ENCODE measurements at regions of chr3 and their contacts with region 1.

Region 1: GRCh38 chr3:173681188-173681678 is 283.7 kb downstream of the NLGN1 start:
- DNase-seq: no peak
- H3K4me3 ChIP-seq: no peak overlapping the region
- H3K27ac ChIP-seq: no peak overlapping the region
- H3K4me1 ChIP-seq: no peaks in the 10 kb centered on the region
- H3K27me3 ChIP-seq: no peaks in the 10 kb centered on the region
- CTCF ChIP-seq: no peak
- POLR2A ChIP-seq: no peak

Region 2: DNA sequence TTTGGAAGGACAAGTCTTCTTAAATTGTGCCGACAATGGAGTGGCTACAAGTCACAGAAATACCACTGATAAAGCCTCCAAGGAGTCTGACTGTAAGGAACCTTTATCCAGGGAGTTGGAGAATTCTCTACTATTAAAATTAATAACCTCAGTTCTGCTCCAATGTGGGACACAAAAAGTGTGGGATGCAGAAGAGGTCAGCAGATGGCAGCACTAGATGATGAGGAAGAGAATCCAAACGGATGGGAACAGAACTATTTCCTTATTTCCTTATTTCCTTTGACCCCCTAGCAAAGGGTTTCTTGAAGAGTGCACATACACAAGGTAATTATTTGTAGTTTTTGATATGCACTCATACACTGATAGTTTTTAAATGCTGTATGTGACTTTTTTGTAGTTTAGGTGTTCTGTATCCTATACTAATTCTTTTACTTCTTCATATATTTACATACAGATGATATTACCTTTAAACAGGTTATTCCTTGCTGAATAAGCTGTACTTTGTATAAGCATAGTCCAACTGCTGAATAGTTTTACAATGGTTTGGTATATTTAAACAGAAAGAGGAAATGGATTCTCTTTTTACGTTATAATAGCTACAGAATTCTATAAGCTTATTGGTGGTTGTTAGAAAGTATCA is 309.3 kb before region 1 on chr3:
- intact Hi-C with region 1: loop called (anchors 5 kb)
- DNase-seq: no peak
- H3K4me3 ChIP-seq: no peak overlapping the region
- H3K27ac ChIP-seq: no peak overlapping the region
- H3K4me1 ChIP-seq: no peaks in the 10 kb centered on the region
- H3K27me3 ChIP-seq: no peaks in the 10 kb centered on the region
- CTCF ChIP-seq: peak; percentile 29 to 58 (median 48)
- POLR2A ChIP-seq: no peak

Region 3: GRCh38 chr3:173911446-173911845 is 230.2 kb after region 1 on chr3:
- intact Hi-C with region 1: no loop called
- DNase-seq: no peak
- H3K4me3 ChIP-seq: no peak overlapping the region
- H3K27ac ChIP-seq: no peak overlapping the region
- H3K4me1 ChIP-seq: no peaks in the 10 kb centered on the region
- H3K27me3 ChIP-seq: no peaks in the 10 kb centered on the region
- CTCF ChIP-seq: no peak
- POLR2A ChIP-seq: no peak

Region 4: DNA sequence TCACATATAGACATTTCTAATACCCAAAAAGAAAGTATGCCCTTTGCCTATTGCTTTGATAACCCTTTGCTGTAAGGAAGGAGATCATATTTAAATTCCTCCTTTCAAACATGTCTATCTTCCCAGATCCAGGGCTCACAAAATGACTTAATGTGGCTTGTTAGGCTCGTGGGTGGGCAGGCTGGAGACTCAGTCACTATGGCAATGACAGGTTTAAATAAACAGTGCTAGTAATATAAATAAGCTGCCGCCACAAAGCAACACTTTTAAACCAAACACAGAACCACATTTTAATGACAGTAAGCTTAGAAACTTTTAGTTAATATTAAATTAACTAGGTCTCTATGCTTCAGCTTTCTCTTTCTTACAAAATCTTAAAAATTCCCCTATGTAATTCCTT is 561.9 kb after region 1 on chr3:
- intact Hi-C with region 1: no loop called
- DNase-seq: no peak
- H3K4me3 ChIP-seq: no peak overlapping the region
- H3K27ac ChIP-seq: no peak overlapping the region
- H3K4me1 ChIP-seq: no peaks in the 10 kb centered on the region
- H3K27me3 ChIP-seq: no peaks in the 10 kb centered on the region
- CTCF ChIP-seq: no peak
- POLR2A ChIP-seq: no peak

Measured in vagina (tissue), 2 donors.